GM18951 (cell line): ENCODE measurements at regions of chr5 and their contacts with region 1.

Region 1: GRCh38 chr5:172283020-172283861 is at the start of gene UBTD2:
- POLR2A ChIP-seq: no peak

Region 2: DNA sequence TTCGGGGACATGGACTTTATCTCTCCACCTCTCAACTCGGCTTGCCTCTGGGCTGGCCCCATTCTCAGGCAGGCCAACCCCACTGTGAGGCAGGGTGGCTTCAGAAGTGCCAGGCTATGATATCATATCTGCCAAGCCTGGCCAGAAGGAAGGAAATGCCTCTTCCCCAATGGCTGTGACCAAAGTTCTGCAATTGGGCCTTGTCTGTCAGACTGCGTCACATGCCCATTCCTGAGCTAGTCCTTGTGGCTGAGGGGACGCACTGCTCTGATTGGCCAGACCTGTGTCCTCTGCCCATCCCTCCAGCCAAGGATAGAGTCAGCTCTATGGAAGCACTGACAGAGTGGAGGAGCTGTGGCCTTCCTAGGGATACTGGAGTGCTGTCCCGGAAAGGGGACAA is 485.7 kb before region 1 on chr5:
- in situ Hi-C with region 1: no loop called
- POLR2A ChIP-seq: no peak

Region 3: DNA sequence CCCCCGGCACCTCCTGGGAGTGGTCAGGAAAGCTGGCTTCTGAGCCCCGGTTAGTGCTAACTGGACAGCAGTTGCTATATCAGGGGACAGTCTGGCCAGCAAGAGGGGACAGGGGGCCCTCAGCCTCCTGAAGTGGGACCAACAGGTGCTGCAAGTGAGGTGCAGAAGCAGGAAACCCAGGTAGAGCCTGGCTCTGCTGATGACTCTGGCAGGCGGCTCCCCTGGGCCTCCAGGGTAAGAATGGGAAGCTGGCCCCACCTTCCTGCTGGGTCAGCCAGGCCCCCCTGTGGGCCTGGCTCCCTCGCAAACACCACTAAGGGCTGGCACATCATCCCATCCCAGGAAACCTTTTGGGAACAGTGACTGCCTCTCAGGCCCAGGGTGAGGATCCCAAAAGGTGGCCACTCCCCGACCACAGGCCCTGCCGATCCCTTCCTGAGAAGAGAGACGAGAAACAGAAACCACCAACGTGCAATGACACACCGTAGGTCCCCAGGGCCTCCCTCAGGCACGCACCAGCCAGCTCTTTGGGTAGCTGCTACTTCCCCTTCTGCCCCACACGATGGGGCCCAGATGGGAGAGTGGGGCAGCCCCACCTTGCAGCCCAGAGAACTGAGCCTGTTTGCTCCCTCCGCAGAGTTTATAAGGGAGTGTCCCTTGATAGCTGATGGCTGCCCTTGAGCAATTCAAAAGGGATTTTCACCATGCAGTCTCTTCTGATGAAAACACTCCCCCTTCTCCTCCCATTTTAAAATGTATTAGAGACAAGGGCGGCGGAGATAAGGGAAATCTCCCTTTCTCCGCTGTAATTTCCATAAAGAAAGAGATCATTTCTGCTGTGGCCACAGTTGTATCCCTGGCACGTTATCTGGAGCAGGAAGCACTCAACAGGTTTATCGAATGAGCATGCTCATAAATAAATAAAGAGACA is 172.1 kb before region 1 on chr5:
- in situ Hi-C with region 1: loop called (anchors 10 kb)
- POLR2A ChIP-seq: no peak

Region 4: DNA sequence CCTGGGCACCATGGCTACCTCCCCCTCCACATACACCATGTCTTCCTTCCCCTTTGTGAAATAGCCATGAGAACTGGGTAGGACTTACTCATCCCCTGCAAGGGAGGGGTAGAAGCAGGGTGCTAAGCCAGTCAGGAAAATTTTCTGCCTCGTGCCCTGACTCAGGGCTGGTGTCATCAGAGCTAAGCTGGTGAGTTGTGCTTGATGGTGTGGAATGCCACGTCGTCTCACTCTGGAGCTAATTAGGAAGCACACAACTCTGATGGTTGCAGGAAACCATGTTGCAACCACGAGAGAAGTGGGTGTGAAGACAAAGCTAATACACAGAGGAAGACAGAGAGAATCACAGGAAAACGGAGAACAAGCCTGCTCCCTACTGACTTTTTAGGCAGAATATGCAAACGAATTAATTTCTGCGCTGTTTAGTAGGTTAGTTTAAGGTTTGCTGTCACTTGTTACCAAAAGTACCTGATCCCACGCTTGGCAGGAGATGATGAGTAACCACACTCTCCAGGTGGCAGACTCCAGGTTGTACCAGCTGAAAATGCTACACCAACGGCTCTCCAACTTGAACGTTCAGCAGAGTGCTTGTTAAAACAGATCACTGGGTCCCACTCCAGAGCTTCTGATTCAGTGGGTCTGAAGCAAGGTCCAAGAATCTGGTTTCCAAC is 149.7 kb before region 1 on chr5:
- in situ Hi-C with region 1: no loop called
- POLR2A ChIP-seq: no peak

Region 5: DNA sequence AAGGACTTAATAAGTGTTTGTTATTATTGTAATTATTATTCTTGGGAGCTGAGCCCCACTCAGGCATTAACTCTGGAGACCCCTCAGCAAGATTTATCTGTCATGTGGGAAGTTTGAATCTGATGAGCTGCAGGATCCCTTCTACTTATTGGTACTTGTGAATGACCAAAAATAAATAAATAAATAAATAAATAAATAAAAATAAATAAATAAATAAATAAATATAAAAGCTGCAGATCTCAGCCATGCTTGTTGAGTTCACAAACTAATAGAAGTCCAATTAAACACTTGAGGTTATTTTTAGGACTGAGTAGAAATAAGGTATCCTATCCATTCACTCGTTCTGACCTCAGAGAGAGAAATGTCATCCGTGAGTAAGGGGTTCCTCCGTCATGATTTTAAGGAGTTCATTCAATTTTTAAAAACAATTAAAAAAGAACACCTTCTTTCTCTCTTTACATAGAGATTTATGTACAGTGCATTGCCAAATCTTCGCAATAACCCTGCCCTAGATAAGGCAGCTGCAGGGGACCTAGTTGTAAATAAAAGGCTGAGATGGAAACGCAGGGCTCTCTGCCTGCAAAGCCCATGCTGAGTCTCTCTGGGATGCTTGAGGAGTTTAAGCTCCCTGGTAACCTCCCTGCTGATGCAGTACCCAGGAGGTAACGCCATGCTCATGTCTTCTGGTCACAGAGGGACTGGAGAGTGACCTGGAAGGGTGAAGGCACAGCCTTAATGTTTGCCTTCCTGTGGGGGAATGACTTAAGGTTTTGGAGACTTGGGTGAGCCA is 88.1 kb before region 1 on chr5:
- in situ Hi-C with region 1: loop called (anchors 10 kb)
- POLR2A ChIP-seq: no peak